Activated naive CD4-positive, alpha-beta T cell treated with anti-CD3 and anti-CD28 coated beads for 36 hours (primary cell): ENCODE measurements at regions of chr14 and their contacts with region 1.

Region 1: GRCh38 chr14:58171090-58171489 is 19.1 kb upstream of the ARMH4 start:
- DNase-seq: peak; percentile 71
- H3K4me3 Mint-ChIP-seq: no peak overlapping the region
- H3K27ac Mint-ChIP-seq: no peak overlapping the region
- H3K4me1 Mint-ChIP-seq: peaks cover 6% of the 10 kb centered on the region
- H3K27me3 Mint-ChIP-seq: peaks cover 3% of the 10 kb centered on the region

Region 2: DNA sequence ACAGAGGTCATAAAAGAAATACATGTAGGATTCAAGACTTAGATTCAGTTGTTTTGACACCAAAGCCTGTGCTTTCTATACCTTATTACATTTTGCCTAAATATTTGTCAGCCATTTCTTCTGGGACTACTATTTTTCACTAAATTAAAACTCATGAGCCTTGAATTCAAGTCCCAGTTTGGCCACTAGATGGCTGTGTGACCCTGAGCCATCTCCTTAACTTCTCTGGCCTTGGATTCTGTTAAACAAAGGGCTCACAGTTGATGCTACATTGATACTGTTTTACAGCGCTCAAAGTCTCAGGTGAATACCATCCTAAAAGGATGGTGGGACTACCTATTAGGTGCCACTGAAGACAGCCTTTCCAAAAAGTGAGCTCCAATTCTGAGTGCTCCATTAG is 637.9 kb before region 1 on chr14:
- CTCF ChIA-PET with region 1: no interaction called
- intact Hi-C with region 1: loop called (anchors 10 kb)
- DNase-seq: peak; percentile 45
- H3K4me3 Mint-ChIP-seq: no peak overlapping the region
- H3K27ac Mint-ChIP-seq: no peak overlapping the region
- H3K4me1 Mint-ChIP-seq: no peaks in the 10 kb centered on the region
- H3K27me3 Mint-ChIP-seq: peaks cover 4% of the 10 kb centered on the region

Region 3: DNA sequence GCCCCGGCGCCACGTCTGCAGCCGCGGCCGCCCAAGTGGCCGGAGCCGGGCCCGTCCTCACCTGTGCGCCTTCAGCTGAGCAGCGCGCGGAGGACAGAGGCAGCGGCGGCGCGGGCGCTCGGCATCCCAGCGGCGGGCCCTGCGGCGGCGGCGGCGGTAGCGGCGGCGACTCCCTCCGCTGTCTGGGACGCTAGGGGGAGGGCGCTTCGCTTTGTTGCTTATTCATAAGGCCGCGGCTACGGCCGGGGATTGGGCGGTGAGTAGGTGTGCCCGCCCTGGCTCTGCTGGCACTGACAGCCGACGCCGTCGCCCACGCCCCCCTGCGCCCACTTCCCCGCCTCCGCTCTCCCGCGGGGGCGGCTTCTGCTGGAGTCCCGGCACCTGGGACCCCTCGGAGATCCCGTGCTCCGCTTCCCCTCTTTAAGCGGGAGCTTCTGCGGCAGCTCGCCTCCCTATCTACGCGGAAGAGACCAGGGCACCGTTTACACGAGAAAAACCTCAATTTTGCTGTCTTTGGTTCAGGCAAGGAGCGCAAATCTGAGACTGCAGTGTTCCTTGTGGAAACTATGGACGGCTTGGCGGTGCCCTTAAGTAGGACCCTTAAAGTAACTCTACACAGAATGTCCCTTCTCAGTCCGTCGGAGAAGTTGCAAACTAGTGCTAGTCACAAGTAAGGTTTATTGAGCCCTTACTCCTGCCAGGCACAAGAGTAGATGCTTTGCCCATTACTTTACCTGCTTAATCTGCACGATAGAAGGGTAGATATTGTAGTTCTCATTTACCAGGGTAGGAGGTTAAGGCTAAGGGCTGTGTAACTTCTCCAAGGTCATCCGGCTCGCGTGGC is 18.9 kb before region 1 on chr14 and contains the start of gene ARMH4:
- CTCF ChIA-PET with region 1: interaction called, 4 read pairs
- intact Hi-C with region 1: loop called (anchors 1 kb)
- DNase-seq: peak; percentile 75
- H3K4me3 Mint-ChIP-seq: peak within 1 kb of the TSS; percentile 70
- H3K27ac Mint-ChIP-seq: no peak within 1 kb of the TSS
- H3K4me1 Mint-ChIP-seq: peaks cover 11% of the 10 kb centered on the region
- H3K27me3 Mint-ChIP-seq: peaks cover 53% of the 10 kb centered on the region
- total RNA-seq, gene ARMH4: 0.43 TPM in 1 of 2 experiments, not detected in the other

Region 4: GRCh38 chr14:58258156-58258555 is 87.1 kb after region 1 on chr14:
- CTCF ChIA-PET with region 1: no interaction called
- intact Hi-C with region 1: no loop called
- DNase-seq: no peak
- H3K4me3 Mint-ChIP-seq: no peak overlapping the region
- H3K27ac Mint-ChIP-seq: peak overlapping the region; percentile 53
- H3K4me1 Mint-ChIP-seq: peaks cover 14% of the 10 kb centered on the region
- H3K27me3 Mint-ChIP-seq: no peaks in the 10 kb centered on the region